ENCODE measurements at regions of chr5 and their contacts with region 1.

Region 1: DNA sequence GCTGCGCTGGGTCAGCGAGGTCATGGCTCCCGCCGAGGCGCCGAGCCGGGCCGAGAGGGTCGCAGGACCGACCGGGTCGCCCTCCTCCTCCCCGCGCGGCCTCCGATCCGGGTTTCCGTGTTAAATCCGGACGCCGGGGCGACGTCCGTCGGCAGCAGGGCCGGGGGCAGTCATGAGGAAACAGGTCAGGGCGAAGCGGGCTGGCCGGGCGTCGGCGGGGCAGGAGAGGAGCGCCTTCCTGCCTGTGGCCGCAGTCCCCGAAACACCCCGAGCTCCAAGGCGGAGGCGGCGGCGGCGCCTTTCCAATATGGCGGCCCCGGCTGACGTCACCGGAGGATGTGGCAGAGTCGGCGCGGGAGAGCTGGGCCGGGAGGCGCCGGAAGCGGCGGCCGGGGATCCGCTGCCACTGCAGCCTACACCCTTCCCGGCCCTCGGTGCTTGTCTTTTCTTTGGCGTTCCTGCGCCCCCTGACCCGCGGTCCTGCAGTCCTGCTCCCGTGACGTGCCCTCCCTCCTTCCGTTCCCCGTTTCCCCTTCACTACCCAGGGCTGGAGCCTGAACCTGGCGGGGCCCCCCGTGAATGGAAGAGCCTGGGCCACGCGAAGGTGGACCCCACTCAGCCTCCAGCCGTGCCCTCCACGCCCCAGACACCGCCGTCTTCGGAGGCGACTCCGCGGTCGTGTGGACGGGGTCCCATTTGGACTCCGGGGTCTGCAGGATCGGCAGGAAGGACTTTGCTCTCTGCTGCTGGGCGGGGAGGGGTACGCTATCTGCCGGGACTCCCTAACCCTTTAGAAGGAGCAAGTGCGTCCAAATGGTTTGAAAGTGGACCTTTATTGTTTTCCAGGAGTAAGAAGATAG is at the start of gene GOLPH3:
- DNase-seq: peak; percentile 82
- H3K4me3 ChIP-seq: peak within 1 kb of the TSS; percentile 89 to 99 (median 96)
- H3K27ac ChIP-seq: peak within 1 kb of the TSS; percentile 91
- H3K4me1 ChIP-seq: peaks cover 17% of the 10 kb centered on the region
- H3K27me3 ChIP-seq: peaks cover 0 to 2% of the 10 kb centered on the region in 2 experiments
- CTCF ChIP-seq: no peak
- POLR2A ChIP-seq: peak; percentile 97
- total RNA-seq, gene GOLPH3: 67.2 and 70.2 TPM in 2 replicates

Region 2: GRCh38 chr5:32098291-32098690 is 76.0 kb before region 1 on chr5:
- CTCF ChIA-PET with region 1: interaction called, 3 read pairs
- POLR2A ChIA-PET with region 1: interaction called, 4 read pairs
- dilution Hi-C with region 1: no loop called
- intact Hi-C with region 1: loop called (anchors 1 kb)
- DNase-seq: peak; percentile 96
- H3K4me3 ChIP-seq: peak overlapping the region in 1 of 3 experiments; percentile 43
- H3K27ac ChIP-seq: peak overlapping the region; percentile 96
- H3K4me1 ChIP-seq: peaks cover 45% of the 10 kb centered on the region
- H3K27me3 ChIP-seq: no peaks in the 10 kb centered on the region
- CTCF ChIP-seq: no peak
- POLR2A ChIP-seq: no peak

Region 3: GRCh38 chr5:32193591-32193990 is 19.4 kb after region 1 on chr5:
- CTCF ChIA-PET with region 1: interaction called, 9 read pairs
- POLR2A ChIA-PET with region 1: no interaction called
- dilution Hi-C with region 1: no loop called
- intact Hi-C with region 1: loop called (anchors 1 kb)
- DNase-seq: peak; percentile 98
- H3K4me3 ChIP-seq: peak overlapping the region in 1 of 3 experiments; percentile 9
- H3K27ac ChIP-seq: peak overlapping the region; percentile 24
- H3K4me1 ChIP-seq: peaks cover 8% of the 10 kb centered on the region
- H3K27me3 ChIP-seq: peaks cover 0 to 5% of the 10 kb centered on the region in 2 experiments
- CTCF ChIP-seq: no peak
- POLR2A ChIP-seq: no peak

Region 4: GRCh38 chr5:32312647-32313523 is 138.6 kb after region 1 on chr5 and contains the start of gene MTMR12:
- CTCF ChIA-PET with region 1: interaction called, 3 read pairs
- POLR2A ChIA-PET with region 1: no interaction called
- dilution Hi-C with region 1: no loop called
- intact Hi-C with region 1: loop called (anchors 1 kb)
- DNase-seq: peak; percentile 100
- H3K4me3 ChIP-seq: peak within 1 kb of the TSS; percentile 55 to 88 (median 80)
- H3K27ac ChIP-seq: peak within 1 kb of the TSS; percentile 92
- H3K4me1 ChIP-seq: peaks cover 7% of the 10 kb centered on the region
- H3K27me3 ChIP-seq: no peaks in the 10 kb centered on the region
- CTCF ChIP-seq: no peak
- POLR2A ChIP-seq: peak; percentile 60
- total RNA-seq, gene MTMR12: 35.4 and 38.6 TPM in 2 replicates

Region 5: DNA sequence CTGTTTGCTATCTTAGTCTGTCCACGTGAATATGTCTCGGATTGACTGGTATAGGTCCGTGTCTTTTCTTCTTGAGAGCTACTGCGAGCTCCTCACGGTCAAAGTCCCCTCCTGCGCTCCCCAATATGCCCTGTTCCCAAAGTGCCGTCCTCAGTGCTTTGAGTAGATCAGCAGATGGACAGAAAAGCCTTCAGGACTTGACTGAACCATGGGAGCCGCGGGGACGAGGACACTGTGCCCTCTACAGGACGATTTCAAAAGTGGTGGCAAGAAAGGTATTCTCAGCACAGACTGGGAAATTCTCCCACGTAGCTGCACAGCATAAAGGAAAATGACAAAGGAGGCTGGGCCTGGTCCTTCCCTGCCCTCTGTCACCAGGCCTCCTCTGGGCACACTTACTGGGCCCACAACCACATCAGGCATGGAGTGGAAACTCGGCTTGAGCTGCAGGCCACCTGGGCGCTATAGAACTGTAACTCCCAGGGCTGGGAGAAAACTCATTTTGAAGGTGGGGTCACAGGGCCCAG is 155.1 kb after region 1 on chr5:
- CTCF ChIA-PET with region 1: interaction called, 16 read pairs
- POLR2A ChIA-PET with region 1: no interaction called
- dilution Hi-C with region 1: no loop called
- intact Hi-C with region 1: loop called (anchors 1 kb)
- DNase-seq: peak; percentile 80
- H3K4me3 ChIP-seq: no peak overlapping the region
- H3K27ac ChIP-seq: no peak overlapping the region
- H3K4me1 ChIP-seq: no peaks in the 10 kb centered on the region
- H3K27me3 ChIP-seq: no peaks in the 10 kb centered on the region
- CTCF ChIP-seq: peak; percentile 60 to 80
- POLR2A ChIP-seq: no peak

Region 6: GRCh38 chr5:32444431-32445286 is 270.4 kb after region 1 on chr5 and contains the start of gene ZFR:
- CTCF ChIA-PET with region 1: no interaction called
- POLR2A ChIA-PET with region 1: no interaction called
- dilution Hi-C with region 1: no loop called
- intact Hi-C with region 1: loop called (anchors 5 kb)
- DNase-seq: peak; percentile 92
- H3K4me3 ChIP-seq: peak within 1 kb of the TSS; percentile 91 to 98 (median 93)
- H3K27ac ChIP-seq: peak within 1 kb of the TSS; percentile 84
- H3K4me1 ChIP-seq: peaks cover 24% of the 10 kb centered on the region
- H3K27me3 ChIP-seq: no peaks in the 10 kb centered on the region
- CTCF ChIP-seq: no peak
- POLR2A ChIP-seq: peak; percentile 85
- total RNA-seq, gene ZFR: 58.6 and 60.1 TPM in 2 replicates

Measured in endothelial cell of umbilical vein (primary cell).